ENCODE measurements at regions of chr17 and their contacts with region 1.

Region 1: DNA sequence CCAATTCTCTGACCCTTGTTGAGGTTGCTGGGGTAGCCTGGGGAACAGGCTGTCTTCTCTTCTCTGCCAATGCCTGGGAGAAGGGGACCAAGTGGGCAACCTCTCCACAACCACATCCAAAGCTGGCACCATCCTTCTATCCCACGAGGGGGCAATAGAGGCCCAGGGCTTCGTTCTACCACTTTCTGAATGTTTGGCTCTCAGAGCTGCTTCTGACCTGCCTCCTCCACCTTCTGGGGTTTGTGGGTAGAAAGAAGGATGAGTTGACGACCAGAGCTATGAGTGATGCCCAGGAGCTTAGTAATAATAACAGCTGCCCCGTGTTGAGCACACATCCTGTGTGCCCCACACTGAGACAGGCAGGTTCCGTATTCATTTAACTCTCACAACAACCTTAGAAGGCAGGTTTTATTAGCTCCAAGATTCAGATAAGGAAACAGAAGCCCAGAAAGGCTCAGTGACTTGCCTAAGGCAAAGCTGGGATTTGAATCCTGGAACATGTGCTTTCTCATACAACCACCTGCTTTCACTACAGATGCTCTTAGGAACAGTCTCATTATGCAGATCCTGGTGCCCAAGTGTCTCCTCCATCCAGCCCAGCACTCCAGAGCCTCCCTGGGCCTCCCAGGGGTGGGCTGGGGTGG is 11.1 kb downstream of the TSPOAP1 start:
- DNase-seq: no peak
- H3K4me3 ChIP-seq: no peak overlapping the region
- H3K27ac ChIP-seq: no peak overlapping the region
- H3K4me1 ChIP-seq: peaks cover 0 to 5% (median 0%) of the 10 kb centered on the region in 3 donors
- H3K27me3 ChIP-seq: no peaks in the 10 kb centered on the region
- CTCF ChIP-seq: peak; percentile 52 to 82 (median 72)
- POLR2A ChIP-seq: no peak

Region 2: DNA sequence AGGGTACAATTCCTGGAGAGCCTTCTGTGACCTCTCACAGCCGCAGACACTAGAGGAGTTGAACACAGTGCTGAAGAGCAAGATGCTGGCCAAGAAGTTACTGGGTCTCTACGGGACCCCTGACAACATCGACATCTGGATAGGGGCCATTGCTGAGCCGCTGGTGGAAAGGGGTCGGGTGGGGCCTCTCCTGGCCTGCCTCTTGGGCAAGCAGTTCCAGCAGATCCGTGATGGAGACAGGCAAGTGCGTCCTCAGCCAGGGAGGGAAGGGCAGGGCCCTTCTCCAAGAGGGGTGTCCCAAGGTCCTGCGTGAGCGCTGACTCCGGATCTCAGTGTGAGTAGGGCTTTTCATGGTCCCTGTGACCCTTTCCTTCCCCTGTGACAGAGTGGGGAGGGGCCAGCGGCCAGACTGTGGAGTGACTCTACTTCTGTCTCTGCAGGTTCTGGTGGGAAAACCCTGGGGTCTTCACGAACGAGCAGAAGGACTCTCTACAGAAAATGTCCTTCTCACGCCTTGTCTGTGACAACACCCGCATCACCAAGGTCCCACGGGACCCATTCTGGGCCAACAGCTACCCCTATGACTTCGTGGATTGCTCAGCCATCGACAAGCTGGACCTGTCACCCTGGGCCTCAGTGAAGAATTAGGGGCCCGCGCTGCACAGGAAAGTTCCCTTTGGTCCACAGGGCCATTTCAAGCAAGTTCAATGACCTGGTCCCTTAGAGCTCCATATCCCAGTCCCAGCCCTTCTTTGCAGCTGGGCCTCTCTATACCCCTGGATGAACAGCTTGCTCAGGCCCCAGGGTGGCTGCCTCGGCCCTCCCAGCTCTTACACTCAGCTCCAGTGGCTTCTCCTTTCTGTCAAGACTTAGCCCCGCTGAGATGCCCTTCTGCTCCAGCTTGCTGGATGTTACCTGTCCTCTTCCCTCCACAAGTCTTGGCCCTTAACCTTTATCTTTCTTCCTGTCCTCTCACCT is 49.9 kb before region 1 on chr17:
- intact Hi-C with region 1: no loop called
- DNase-seq: no peak
- H3K4me3 ChIP-seq: no peak overlapping the region
- H3K27ac ChIP-seq: no peak overlapping the region
- H3K4me1 ChIP-seq: no peaks in the 10 kb centered on the region
- H3K27me3 ChIP-seq: peaks cover 0 to 53% (median 0%) of the 10 kb centered on the region in 4 donors
- CTCF ChIP-seq: no peak
- POLR2A ChIP-seq: no peak

Region 3: GRCh38 chr17:58447039-58447975 is 129.8 kb after region 1 on chr17:
- intact Hi-C with region 1: loop called (anchors 5 kb)
- DNase-seq: no peak
- H3K4me3 ChIP-seq: no peak overlapping the region
- H3K27ac ChIP-seq: no peak overlapping the region
- H3K4me1 ChIP-seq: no peaks in the 10 kb centered on the region
- H3K27me3 ChIP-seq: no peaks in the 10 kb centered on the region
- CTCF ChIP-seq: peak; percentile 37 to 82 (median 64)
- POLR2A ChIP-seq: no peak